IMR-90 (cell line): ENCODE measurements at regions of chr3 and their contacts with region 1.

Region 1: DNA sequence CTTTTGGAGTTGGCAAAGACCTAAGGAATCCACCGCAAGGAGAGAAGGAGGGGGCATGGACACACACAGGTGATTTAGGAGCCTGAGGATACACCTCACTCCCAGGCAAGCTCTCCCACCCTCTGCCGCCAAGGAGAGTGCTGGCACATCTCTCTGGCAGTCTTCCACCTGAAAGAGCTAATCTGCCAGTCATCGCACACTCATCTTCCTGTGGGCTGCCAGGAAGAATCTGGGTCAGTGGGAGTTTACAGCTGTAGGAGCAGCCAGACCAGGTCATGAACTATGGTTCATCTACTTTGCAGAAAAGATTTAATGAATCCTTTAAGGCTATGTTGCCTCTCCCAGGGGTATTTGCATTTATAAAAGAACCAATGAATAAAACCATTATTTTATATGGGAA is 170.6 kb upstream of the TSC22D2 start:
- DNase-seq: peak; percentile 73
- ATAC-seq: no peak
- H3K4me3 ChIP-seq: no peak overlapping the region
- H3K27ac ChIP-seq: no peak overlapping the region
- H3K4me1 ChIP-seq: peaks cover 22% of the 10 kb centered on the region
- H3K27me3 ChIP-seq: no peaks in the 10 kb centered on the region
- CTCF ChIP-seq: no peak
- POLR2A ChIP-seq: no peak
- RAD21 ChIP-seq: no peak

Region 2: GRCh38 chr3:150348500-150348899 is 111.0 kb after region 1 on chr3:
- CTCF ChIA-PET with region 1: interaction called, 3 read pairs
- POLR2A ChIA-PET with region 1: no interaction called
- dilution Hi-C with region 1: no loop called
- in situ Hi-C with region 1: no loop called
- intact Hi-C with region 1: loop called (anchors 1 kb)
- DNase-seq: peak; percentile 91
- ATAC-seq: peak; percentile 77
- H3K4me3 ChIP-seq: no peak overlapping the region
- H3K27ac ChIP-seq: no peak overlapping the region
- H3K4me1 ChIP-seq: peaks cover 17% of the 10 kb centered on the region
- H3K27me3 ChIP-seq: no peaks in the 10 kb centered on the region
- CTCF ChIP-seq: no peak
- POLR2A ChIP-seq: no peak
- RAD21 ChIP-seq: peak; percentile 18; the same call in 1 of the 2 replicates